Mammary epithelial cell (primary cell): ENCODE measurements at regions of chr9 and their contacts with region 1.

Region 1: DNA sequence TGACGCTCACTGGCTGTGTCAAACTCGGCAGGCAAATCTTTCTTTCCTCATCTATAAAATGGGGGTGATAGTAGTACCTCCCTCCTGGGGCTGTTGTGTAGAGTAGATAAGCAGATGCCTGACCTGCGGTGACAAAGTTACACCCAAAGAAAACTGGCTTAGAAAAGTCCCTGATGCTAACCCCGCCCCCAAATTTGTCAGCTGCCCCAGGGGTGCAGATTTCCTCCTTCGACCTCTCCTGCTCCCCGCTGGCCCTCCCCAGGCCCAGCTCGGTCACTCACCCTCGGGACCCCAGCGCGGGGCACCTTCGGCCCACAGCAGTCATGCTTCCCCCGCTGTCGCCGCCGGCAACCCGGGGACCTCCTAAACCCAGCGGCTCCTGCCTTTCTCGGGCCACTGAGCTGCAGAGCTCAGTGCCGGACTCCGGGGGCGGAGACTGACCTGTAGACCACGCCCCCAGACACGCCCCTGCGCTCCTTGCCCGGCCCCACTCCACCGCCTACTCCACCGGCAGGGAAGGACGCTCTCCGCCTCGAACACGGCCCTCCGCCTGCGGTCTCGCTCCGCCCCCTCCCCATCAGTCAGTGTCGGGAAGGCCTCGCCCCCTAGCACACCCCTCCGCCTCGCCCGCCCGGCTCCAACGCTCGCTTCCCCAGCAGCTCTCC is 7.4 kb downstream of the SH2D3C start:
- DNase-seq: peak; percentile 97
- H3K4me3 ChIP-seq: peak overlapping the region; percentile 31 to 62 (median 48)
- H3K27ac ChIP-seq: no peak overlapping the region
- H3K4me1 ChIP-seq: peaks cover 8% of the 10 kb centered on the region
- H3K27me3 ChIP-seq: no peaks in the 10 kb centered on the region
- CTCF ChIP-seq: no peak

Region 2: DNA sequence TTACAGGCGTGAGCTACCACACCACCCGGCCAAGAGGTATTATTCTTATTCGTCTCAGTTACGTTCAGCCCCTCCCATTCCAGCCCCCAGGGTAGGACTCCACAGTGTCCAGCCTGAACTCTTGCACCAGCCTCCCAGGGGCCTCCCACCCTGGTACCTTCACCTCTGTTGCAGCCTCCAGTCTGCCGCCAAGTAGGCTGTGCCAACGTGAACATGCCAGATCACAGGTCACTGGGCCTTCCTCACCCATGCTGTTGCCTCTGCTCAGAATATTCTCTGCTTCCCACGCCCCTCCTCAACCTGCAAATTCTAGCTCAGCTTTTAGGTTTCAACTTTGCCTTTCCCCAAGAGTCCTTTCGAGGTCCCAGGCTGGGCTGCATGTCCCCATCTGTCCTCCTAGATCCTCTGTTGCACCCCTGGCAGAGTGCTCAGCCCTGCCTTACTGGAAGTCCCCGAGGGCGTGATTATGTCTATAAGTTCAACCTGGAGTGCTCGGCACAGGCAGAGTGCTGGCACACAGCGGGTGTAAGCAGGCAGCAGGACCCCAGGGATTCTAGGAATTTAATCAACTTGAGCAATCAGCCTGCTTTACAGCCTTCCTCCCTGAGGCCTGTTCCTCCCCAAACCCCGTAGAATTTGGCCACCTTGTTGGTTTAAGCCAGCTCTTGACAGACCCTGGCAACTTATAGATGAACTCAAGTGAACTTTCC is 172.0 kb before region 1 on chr9:
- CTCF ChIA-PET with region 1: no interaction called
- dilution Hi-C with region 1: no loop called
- in situ Hi-C with region 1: no loop called
- intact Hi-C with region 1: no loop called
- DNase-seq: no peak
- H3K4me3 ChIP-seq: no peak overlapping the region
- H3K27ac ChIP-seq: no peak overlapping the region
- H3K4me1 ChIP-seq: no peaks in the 10 kb centered on the region
- H3K27me3 ChIP-seq: no peaks in the 10 kb centered on the region
- CTCF ChIP-seq: no peak

Region 3: GRCh38 chr9:127726871-127727270 is 44.2 kb before region 1 on chr9:
- CTCF ChIA-PET with region 1: no interaction called
- dilution Hi-C with region 1: no loop called
- in situ Hi-C with region 1: no loop called
- intact Hi-C with region 1: no loop called
- DNase-seq: no peak
- H3K4me3 ChIP-seq: no peak overlapping the region
- H3K27ac ChIP-seq: no peak overlapping the region
- H3K4me1 ChIP-seq: peaks cover 18% of the 10 kb centered on the region
- H3K27me3 ChIP-seq: no peaks in the 10 kb centered on the region
- CTCF ChIP-seq: no peak

Region 4: DNA sequence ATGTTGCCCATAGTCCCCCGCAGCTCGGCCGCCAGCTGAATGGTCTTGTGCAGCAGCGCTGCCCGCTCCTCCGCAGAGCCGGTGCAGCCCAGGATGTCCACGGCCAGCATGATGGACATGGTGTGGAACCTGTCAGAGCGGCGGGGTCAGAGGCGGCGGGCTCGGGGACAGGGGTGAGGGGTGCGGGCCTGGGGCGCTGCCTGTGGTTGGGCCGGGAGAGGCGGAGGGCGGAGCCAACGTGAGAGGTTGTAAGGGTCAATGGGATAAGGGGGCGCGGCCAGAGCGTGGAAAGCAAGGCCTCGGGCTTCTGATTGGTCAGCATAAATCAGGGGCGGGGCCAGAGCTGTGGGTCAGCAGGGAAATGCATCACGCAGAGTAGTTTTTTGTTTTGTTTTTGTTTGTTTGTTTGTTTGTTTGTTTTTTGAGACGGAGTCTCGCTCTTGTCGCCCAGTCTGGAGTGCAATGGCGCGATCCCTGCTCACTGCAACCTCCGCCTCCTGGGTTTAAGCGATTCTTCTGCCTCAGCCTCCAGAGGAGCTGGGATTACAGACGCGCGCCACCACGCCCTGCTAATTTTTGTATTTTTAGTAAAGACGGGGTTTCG is 29.1 kb before region 1 on chr9:
- CTCF ChIA-PET with region 1: no interaction called
- dilution Hi-C with region 1: no loop called
- in situ Hi-C with region 1: no loop called
- intact Hi-C with region 1: loop called (anchors 2 kb)
- DNase-seq: no peak
- H3K4me3 ChIP-seq: no peak overlapping the region
- H3K27ac ChIP-seq: no peak overlapping the region
- H3K4me1 ChIP-seq: peaks cover 21% of the 10 kb centered on the region
- H3K27me3 ChIP-seq: no peaks in the 10 kb centered on the region
- CTCF ChIP-seq: no peak